ENCODE measurements at regions of chr10 and their contacts with region 1.

Region 1: DNA sequence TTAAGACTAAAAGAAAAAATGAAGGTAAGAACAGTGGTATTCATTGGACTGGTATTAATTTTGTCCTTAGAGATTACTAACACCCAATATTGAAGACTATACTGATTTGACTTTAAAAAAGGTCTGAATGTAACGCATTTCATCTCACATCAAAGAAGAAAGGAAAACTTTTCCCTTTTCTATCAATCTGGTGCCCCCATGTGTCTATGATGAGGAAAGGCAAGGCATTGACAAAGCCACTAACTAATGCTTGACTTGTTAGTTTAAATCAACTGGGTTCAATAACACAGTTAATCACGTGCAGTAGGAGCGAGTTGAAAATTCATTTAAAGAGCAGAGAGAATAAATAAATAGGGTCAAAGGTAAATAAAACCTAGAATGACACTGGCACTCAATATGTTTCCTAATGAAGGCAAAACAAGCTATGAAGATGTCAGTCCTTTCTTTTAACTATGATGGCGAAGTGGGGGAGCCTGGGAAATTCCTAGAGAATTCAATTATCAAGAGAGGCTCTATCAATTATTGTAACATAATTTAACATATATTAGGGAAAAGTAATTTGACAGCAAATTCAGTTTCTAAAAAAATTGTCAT is 180.9 kb downstream of the ANK3 start:
- DNase-seq: no peak
- ATAC-seq: no peak
- H3K4me3 ChIP-seq: no peak overlapping the region
- H3K4me3 Mint-ChIP-seq: no peak overlapping the region
- H3K27ac ChIP-seq: no peak overlapping the region
- H3K27ac Mint-ChIP-seq: no peak overlapping the region
- H3K4me1 ChIP-seq: peaks cover 7% of the 10 kb centered on the region
- H3K4me1 Mint-ChIP-seq: peaks cover 31% of the 10 kb centered on the region
- H3K27me3 ChIP-seq: no peaks in the 10 kb centered on the region
- H3K27me3 Mint-ChIP-seq: no peaks in the 10 kb centered on the region
- CTCF ChIP-seq: peak; percentile 27

Region 2: GRCh38 chr10:59382831-59383295 is 825.9 kb before region 1 on chr10:
- CTCF ChIA-PET with region 1: no interaction called
- POLR2A ChIA-PET with region 1: no interaction called
- intact Hi-C with region 1: no loop called
- DNase-seq: no peak
- ATAC-seq: no peak
- H3K4me3 ChIP-seq: no peak overlapping the region
- H3K4me3 Mint-ChIP-seq: no peak overlapping the region
- H3K27ac ChIP-seq: no peak overlapping the region
- H3K27ac Mint-ChIP-seq: no peak overlapping the region
- H3K4me1 ChIP-seq: no peaks in the 10 kb centered on the region
- H3K4me1 Mint-ChIP-seq: no peaks in the 10 kb centered on the region
- H3K27me3 ChIP-seq: no peaks in the 10 kb centered on the region
- H3K27me3 Mint-ChIP-seq: no peaks in the 10 kb centered on the region
- CTCF ChIP-seq: no peak

Region 3: GRCh38 chr10:60069311-60069710 is 139.5 kb before region 1 on chr10:
- CTCF ChIA-PET with region 1: no interaction called
- POLR2A ChIA-PET with region 1: no interaction called
- intact Hi-C with region 1: no loop called
- DNase-seq: no peak
- ATAC-seq: no peak
- H3K4me3 ChIP-seq: no peak overlapping the region
- H3K4me3 Mint-ChIP-seq: no peak overlapping the region
- H3K27ac ChIP-seq: no peak overlapping the region
- H3K27ac Mint-ChIP-seq: no peak overlapping the region
- H3K4me1 ChIP-seq: no peaks in the 10 kb centered on the region
- H3K4me1 Mint-ChIP-seq: no peaks in the 10 kb centered on the region
- H3K27me3 ChIP-seq: no peaks in the 10 kb centered on the region
- H3K27me3 Mint-ChIP-seq: no peaks in the 10 kb centered on the region
- CTCF ChIP-seq: no peak

Region 4: GRCh38 chr10:60140651-60141632 is 67.8 kb before region 1 on chr10:
- CTCF ChIA-PET with region 1: no interaction called
- POLR2A ChIA-PET with region 1: no interaction called
- intact Hi-C with region 1: no loop called
- DNase-seq: no peak
- ATAC-seq: no peak
- H3K4me3 ChIP-seq: no peak overlapping the region
- H3K4me3 Mint-ChIP-seq: no peak overlapping the region
- H3K27ac ChIP-seq: no peak overlapping the region
- H3K27ac Mint-ChIP-seq: no peak overlapping the region
- H3K4me1 ChIP-seq: no peaks in the 10 kb centered on the region
- H3K4me1 Mint-ChIP-seq: no peaks in the 10 kb centered on the region
- H3K27me3 ChIP-seq: no peaks in the 10 kb centered on the region
- H3K27me3 Mint-ChIP-seq: no peaks in the 10 kb centered on the region
- CTCF ChIP-seq: no peak

Region 5: GRCh38 chr10:60434418-60435046 is 225.8 kb after region 1 on chr10:
- CTCF ChIA-PET with region 1: no interaction called
- POLR2A ChIA-PET with region 1: no interaction called
- intact Hi-C with region 1: loop called in 1 of 2 experiments (anchors 10 kb)
- DNase-seq: peak in 3 of 14 experiments; percentile 14 to 26 (median 25)
- ATAC-seq: no peak
- H3K4me3 ChIP-seq: no peak overlapping the region
- H3K4me3 Mint-ChIP-seq: no peak overlapping the region
- H3K27ac ChIP-seq: no peak overlapping the region
- H3K27ac Mint-ChIP-seq: no peak overlapping the region
- H3K4me1 ChIP-seq: no peaks in the 10 kb centered on the region
- H3K4me1 Mint-ChIP-seq: no peaks in the 10 kb centered on the region
- H3K27me3 ChIP-seq: no peaks in the 10 kb centered on the region
- H3K27me3 Mint-ChIP-seq: no peaks in the 10 kb centered on the region
- CTCF ChIP-seq: peak; percentile 54

Region 6: DNA sequence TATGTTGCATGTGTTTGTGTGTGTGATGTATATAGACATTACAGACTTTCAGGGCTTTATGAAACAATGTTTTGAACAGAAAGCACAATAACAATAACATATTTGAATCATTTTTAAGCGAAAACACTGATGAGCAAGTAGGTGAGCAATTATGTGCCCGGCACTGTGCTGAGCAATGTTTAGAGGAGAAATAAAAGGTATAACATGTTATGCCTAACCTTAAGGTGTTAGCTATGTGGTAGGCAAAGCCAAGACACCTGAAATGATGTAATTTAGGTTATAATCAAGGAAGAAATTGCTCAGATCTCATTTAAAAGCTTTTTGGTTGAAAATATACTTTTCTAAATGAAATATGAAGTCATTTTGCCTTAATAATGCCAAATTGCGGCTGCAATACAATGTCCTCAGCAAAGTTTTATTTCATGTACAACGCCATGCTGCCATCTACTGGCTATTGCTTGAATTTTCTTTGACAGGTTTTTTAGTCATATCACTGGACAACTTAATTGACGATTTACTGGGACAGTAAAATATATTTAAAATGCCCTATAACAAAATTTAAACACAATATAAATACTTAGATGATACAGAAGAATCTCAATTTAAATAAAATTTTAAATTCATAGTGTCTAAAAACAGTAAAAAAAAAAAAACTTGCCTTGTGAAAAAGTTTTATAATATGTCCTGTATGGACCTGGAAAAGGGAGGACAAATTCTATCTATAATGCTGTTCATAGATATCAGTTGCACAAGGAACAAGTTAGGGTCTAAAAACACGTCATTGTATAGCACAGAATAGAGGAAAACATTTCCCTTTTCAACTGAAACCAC is 438.4 kb after region 1 on chr10:
- CTCF ChIA-PET with region 1: no interaction called
- POLR2A ChIA-PET with region 1: no interaction called
- intact Hi-C with region 1: loop called (anchors 1 to 5 kb)
- DNase-seq: peak in 9 of 14 experiments; percentile 8 to 78 (median 33)
- ATAC-seq: peak; percentile 40
- H3K4me3 ChIP-seq: no peak overlapping the region
- H3K4me3 Mint-ChIP-seq: no peak overlapping the region
- H3K27ac ChIP-seq: no peak overlapping the region
- H3K27ac Mint-ChIP-seq: peak overlapping the region; percentile 5
- H3K4me1 ChIP-seq: peaks cover 6% of the 10 kb centered on the region
- H3K4me1 Mint-ChIP-seq: peaks cover 66% of the 10 kb centered on the region
- H3K27me3 ChIP-seq: no peaks in the 10 kb centered on the region
- H3K27me3 Mint-ChIP-seq: no peaks in the 10 kb centered on the region
- CTCF ChIP-seq: peak; percentile 91

Region 7: GRCh38 chr10:60760749-60761148 is 552.0 kb after region 1 on chr10:
- CTCF ChIA-PET with region 1: no interaction called
- POLR2A ChIA-PET with region 1: no interaction called
- intact Hi-C with region 1: loop called in 1 of 2 experiments (anchors 2 kb)
- DNase-seq: no peak
- ATAC-seq: no peak
- H3K4me3 ChIP-seq: no peak overlapping the region
- H3K4me3 Mint-ChIP-seq: no peak overlapping the region
- H3K27ac ChIP-seq: no peak overlapping the region
- H3K27ac Mint-ChIP-seq: no peak overlapping the region
- H3K4me1 ChIP-seq: no peaks in the 10 kb centered on the region
- H3K4me1 Mint-ChIP-seq: no peaks in the 10 kb centered on the region
- H3K27me3 ChIP-seq: no peaks in the 10 kb centered on the region
- H3K27me3 Mint-ChIP-seq: peaks cover 5% of the 10 kb centered on the region
- CTCF ChIP-seq: no peak

Measured in CD4-positive, alpha-beta T cell (primary cell).